B cell (primary cell): ENCODE measurements at regions of chr4 and their contacts with region 1.

Region 1: GRCh38 chr4:102557636-102558035 is 56.5 kb downstream of the NFKB1 start:
- DNase-seq: no peak
- ATAC-seq: no peak
- H3K4me3 ChIP-seq: no peak overlapping the region
- H3K4me3 Mint-ChIP-seq: no peak overlapping the region
- H3K27ac ChIP-seq: no peak overlapping the region
- H3K27ac Mint-ChIP-seq: no peak overlapping the region
- H3K4me1 ChIP-seq: peaks cover 2 to 9% of the 10 kb centered on the region in 2 donors
- H3K4me1 Mint-ChIP-seq: peaks cover 54% of the 10 kb centered on the region
- H3K27me3 ChIP-seq: no peaks in the 10 kb centered on the region
- H3K27me3 Mint-ChIP-seq: no peaks in the 10 kb centered on the region
- CTCF ChIP-seq: no peak

Region 2: DNA sequence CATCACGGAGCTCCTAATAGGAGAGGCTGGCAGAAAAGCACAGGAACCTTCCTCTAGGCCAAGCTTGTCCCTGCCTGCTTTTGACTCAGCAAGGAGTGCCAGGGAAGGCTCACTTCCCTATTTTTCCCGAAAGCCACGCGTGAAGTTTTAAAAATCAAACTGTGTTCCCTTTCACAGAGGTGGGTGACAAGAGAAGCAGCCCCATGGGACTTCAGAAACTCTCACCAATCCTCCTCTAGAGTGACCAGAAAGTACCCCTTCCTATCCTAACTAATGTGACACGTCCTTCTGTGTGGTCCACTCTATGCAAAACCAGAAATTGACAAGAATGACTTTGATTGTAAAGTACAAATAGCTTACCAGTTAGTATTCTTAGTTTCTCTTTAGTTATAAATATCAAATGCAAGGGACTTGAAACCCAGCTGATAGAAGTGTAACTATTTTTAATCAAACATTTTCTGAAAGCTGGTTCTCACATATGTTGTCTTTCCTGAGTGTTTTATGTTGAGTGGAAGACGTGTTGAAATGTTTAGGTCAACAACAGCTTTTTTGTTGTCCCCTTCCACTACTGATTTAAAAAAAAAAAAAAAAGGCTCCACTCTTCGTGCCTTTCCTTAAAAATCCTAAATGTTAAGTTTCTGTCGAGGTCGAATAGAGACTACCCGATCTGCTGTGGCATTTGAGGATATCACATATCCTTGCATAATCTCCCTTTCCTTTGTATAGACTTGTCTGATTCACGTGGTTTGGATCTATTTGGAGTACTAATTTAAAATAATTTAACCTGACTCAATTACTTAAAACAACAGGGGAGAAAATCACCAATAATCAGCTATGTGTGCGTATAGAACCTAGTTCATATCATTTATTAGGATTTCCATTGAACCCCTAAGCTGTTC is 14.4 kb before region 1 on chr4:
- CTCF ChIA-PET with region 1: no interaction called
- POLR2A ChIA-PET with region 1: no interaction called
- intact Hi-C with region 1: loop called (anchors 2 kb)
- DNase-seq: no peak
- ATAC-seq: no peak
- H3K4me3 ChIP-seq: no peak overlapping the region
- H3K4me3 Mint-ChIP-seq: no peak overlapping the region
- H3K27ac ChIP-seq: no peak overlapping the region
- H3K27ac Mint-ChIP-seq: peak overlapping the region; percentile 4
- H3K4me1 ChIP-seq: peaks cover 7 to 9% of the 10 kb centered on the region in 2 donors
- H3K4me1 Mint-ChIP-seq: peaks cover 24% of the 10 kb centered on the region
- H3K27me3 ChIP-seq: no peaks in the 10 kb centered on the region
- H3K27me3 Mint-ChIP-seq: no peaks in the 10 kb centered on the region
- CTCF ChIP-seq: no peak

Region 3: GRCh38 chr4:102598086-102598761 is 40.6 kb after region 1 on chr4:
- CTCF ChIA-PET with region 1: no interaction called
- POLR2A ChIA-PET with region 1: no interaction called
- intact Hi-C with region 1: no loop called
- DNase-seq: no peak
- ATAC-seq: no peak
- H3K4me3 ChIP-seq: no peak overlapping the region
- H3K4me3 Mint-ChIP-seq: no peak overlapping the region
- H3K27ac ChIP-seq: no peak overlapping the region
- H3K27ac Mint-ChIP-seq: peak overlapping the region; percentile 80
- H3K4me1 ChIP-seq: no peaks in the 10 kb centered on the region
- H3K4me1 Mint-ChIP-seq: peaks cover 17% of the 10 kb centered on the region
- H3K27me3 ChIP-seq: no peaks in the 10 kb centered on the region
- H3K27me3 Mint-ChIP-seq: no peaks in the 10 kb centered on the region
- CTCF ChIP-seq: no peak

Region 4: DNA sequence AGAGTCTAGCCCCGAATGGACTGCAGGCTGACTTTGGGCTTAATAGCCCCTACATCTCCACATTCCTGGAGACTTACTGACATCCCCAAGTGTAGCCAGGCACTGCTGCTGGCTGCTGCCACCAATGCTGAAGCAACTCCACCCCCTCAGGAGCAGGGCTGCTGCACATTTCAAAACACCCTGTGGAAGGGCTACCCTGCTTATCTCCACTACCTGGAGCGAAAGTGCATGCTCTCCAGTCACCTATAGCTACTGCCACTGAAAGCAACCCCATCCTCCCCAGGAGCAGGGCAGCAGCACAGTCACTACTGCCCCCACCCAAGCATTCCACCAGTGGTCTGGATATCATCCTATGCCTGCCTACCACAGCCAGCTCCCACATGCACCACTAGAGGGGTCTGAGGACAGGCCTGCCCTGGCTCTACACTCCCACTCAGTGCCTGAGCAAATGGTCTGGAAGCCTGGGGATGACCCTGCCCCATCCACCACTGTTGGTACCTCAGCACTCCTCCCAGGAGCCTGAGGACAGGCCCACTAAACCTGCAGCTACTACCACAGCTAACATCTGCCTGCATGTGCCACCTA is 147.8 kb after region 1 on chr4:
- CTCF ChIA-PET with region 1: no interaction called
- POLR2A ChIA-PET with region 1: no interaction called
- intact Hi-C with region 1: no loop called
- DNase-seq: no peak
- ATAC-seq: no peak
- H3K4me3 ChIP-seq: no peak overlapping the region
- H3K4me3 Mint-ChIP-seq: no peak overlapping the region
- H3K27ac ChIP-seq: no peak overlapping the region
- H3K27ac Mint-ChIP-seq: no peak overlapping the region
- H3K4me1 ChIP-seq: no peaks in the 10 kb centered on the region
- H3K4me1 Mint-ChIP-seq: peaks cover 15% of the 10 kb centered on the region
- H3K27me3 ChIP-seq: no peaks in the 10 kb centered on the region
- H3K27me3 Mint-ChIP-seq: no peaks in the 10 kb centered on the region
- CTCF ChIP-seq: no peak